Colonic mucosa (tissue), 4 donors: ENCODE measurements at regions of chr6 and their contacts with region 1.

Region 1: GRCh38 chr6:50816115-50816675 is 2.5 kb upstream of the TFAP2B start:
- DNase-seq: peak; percentile 80
- H3K4me3 ChIP-seq: peak overlapping the region; percentile 40
- H3K27ac ChIP-seq: no peak overlapping the region
- H3K4me1 ChIP-seq: no peaks in the 10 kb centered on the region
- H3K27me3 ChIP-seq: peaks cover 46% of the 10 kb centered on the region
- CTCF ChIP-seq: peak; percentile 94

Region 2: DNA sequence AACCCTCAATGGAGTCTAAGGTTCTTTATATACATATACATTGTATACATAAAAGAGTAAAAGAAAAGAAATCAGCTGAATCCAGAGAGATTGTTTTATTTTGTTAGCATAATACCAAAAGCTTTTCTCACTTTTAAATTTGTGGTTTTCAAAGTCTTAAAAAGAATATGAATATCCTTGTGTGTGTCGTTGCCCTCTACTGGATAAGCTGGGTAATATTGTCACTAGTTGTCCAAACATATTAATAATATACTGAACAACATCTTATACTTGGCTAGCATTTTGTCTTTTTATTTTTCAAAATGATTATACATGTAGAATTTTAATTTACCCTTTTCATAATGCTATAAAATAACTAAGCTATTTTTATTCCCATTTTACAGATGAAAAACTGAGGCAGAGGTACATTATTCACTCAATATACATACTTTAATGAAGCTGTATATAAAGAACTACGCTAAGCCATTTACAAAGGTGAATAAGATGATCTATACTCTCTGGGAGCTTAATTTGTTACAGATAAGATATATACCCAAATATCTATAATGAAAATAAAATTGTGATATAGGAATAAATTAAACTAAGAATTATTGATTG is 534.2 kb after region 1 on chr6:
- intact Hi-C with region 1: loop called (anchors 10 kb)
- DNase-seq: no peak
- H3K4me3 ChIP-seq: no peak overlapping the region
- H3K27ac ChIP-seq: no peak overlapping the region
- H3K4me1 ChIP-seq: no peaks in the 10 kb centered on the region
- H3K27me3 ChIP-seq: no peaks in the 10 kb centered on the region
- CTCF ChIP-seq: peak; percentile 13

Region 3: DNA sequence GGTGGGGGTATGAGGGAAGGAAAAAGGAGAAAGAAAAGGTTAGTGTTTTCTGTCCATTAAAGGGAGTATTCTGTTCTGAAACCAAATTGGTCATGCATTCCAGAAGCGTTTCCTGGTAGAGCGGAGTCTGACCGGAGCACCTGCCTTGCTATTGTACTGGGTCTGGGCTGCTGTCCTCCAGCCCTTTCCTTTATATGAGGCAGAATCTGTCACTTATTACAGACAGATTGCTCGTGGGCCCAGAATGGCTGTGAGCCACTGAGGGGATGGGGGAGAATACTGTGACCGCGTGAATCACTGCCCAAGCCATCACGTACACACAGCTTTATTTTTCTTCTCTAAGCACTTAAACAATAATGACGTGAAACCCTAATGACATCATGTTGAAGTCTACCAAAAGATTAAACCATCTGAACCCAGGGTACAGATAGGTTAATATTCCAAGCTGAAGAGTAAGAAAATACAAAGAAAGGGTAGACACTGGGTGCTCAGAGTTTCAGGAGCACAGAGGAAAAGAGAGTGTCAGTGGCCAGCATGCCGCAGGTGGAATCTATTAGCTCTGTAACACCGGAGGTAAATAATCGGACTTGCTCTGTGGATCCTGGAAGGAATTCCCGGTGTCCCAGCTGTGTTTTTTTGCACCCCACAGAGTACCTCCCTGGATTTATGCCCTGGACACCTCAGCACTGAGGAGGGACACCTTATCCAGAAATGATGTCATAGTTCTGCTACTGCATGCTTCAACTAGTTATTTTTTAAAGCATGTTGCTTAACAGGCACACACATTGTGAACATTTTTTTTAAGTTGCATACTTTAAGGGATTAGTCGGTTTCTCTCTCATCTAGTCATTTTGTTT is 697.9 kb after region 1 on chr6:
- intact Hi-C with region 1: loop called (anchors 10 kb)
- DNase-seq: no peak
- H3K4me3 ChIP-seq: no peak overlapping the region
- H3K27ac ChIP-seq: no peak overlapping the region
- H3K4me1 ChIP-seq: no peaks in the 10 kb centered on the region
- H3K27me3 ChIP-seq: no peaks in the 10 kb centered on the region
- CTCF ChIP-seq: no peak

Region 4: DNA sequence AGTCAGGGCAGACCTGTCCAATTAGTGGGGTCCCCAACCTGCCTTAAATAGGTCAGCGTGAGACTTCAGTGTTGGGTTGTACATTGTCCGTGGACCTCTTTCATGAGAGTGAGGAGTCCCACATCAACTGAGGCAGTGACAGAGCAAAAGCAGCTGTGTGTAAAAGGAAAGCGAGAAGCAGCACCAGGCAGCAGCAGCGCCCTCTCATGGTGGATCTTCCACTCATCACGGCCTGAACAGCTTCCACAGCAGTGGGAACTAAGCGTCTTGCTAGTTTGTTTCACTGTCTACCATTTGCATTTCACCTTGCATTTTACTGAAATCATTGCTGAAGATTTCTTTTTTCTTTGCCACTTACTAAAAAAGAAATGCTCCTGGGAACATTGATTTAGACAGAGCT is 937.4 kb after region 1 on chr6:
- intact Hi-C with region 1: loop called (anchors 5 kb)
- DNase-seq: peak; percentile 22
- H3K4me3 ChIP-seq: no peak overlapping the region
- H3K27ac ChIP-seq: no peak overlapping the region
- H3K4me1 ChIP-seq: no peaks in the 10 kb centered on the region
- H3K27me3 ChIP-seq: no peaks in the 10 kb centered on the region
- CTCF ChIP-seq: no peak

Region 5: DNA sequence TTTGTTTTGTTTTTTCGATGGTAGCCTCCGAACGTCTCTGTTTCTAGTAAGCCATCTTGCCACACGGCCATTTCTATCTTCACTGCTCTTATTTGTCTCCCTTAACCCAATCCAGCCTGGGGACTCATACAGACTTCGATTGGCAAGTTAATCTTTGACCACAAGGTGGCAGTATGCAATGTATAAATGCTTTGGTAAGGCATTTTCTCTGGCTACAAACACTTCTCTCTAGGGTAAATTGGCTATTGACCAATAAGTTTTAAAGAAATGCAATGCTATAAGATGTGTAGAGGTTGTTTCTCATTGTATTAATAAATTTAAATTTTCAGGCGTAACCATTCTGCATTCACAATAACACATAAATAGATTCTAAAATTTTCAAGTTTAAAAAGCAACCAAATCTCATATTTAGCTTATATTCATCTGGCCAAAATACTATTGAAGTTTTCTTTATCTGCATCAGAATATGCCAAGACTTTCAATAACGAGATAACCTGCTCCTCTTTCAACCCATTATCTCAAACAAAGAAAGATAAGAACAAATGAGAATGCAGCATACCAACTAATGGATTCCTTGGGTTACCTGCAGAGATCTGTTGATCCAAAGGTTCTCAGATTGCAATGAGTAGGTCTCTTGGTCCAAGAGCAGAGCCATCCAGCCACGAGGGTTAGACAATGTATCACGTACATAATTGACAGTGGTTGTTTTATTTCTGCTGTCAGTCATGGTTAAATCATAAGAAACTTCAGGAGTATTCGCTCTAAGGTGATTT is 1039.3 kb after region 1 on chr6:
- intact Hi-C with region 1: loop called (anchors 10 kb)
- DNase-seq: peak; percentile 30
- H3K4me3 ChIP-seq: no peak overlapping the region
- H3K27ac ChIP-seq: no peak overlapping the region
- H3K4me1 ChIP-seq: no peaks in the 10 kb centered on the region
- H3K27me3 ChIP-seq: no peaks in the 10 kb centered on the region
- CTCF ChIP-seq: peak; percentile 61

Region 6: DNA sequence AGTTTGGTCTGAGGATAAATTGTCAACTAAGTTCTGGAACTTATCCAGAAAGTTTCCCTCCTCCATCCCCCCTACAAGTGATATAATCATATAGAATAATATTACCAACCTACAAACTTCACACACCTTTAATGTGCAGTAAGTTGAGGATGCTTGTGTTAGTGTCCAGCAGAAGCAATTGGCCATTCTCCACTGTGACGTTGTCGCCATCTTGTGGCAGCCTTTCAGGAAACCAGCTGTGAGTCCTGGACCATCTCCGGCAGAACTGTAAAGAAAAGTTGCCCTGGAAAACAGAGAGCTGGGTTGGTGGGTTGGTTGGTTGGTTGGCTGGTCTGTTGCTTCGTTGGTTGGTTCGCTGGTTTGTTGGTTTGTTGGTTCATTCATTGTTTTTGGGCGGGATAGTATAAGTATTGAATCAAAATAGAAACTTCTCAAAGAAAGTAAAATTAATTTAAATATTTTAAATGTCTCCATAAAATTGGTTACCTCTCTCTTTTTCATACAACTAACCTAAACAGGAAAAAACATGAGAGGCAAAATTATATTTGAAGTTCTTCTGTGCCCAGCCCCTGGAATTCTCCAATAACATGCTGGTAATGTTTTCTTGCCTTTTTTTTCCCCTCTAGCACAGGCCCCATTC is 1143.7 kb after region 1 on chr6:
- intact Hi-C with region 1: loop called (anchors 10 kb)
- DNase-seq: peak; percentile 70
- H3K4me3 ChIP-seq: no peak overlapping the region
- H3K27ac ChIP-seq: no peak overlapping the region
- H3K4me1 ChIP-seq: no peaks in the 10 kb centered on the region
- H3K27me3 ChIP-seq: no peaks in the 10 kb centered on the region
- CTCF ChIP-seq: peak; percentile 54

Region 7: DNA sequence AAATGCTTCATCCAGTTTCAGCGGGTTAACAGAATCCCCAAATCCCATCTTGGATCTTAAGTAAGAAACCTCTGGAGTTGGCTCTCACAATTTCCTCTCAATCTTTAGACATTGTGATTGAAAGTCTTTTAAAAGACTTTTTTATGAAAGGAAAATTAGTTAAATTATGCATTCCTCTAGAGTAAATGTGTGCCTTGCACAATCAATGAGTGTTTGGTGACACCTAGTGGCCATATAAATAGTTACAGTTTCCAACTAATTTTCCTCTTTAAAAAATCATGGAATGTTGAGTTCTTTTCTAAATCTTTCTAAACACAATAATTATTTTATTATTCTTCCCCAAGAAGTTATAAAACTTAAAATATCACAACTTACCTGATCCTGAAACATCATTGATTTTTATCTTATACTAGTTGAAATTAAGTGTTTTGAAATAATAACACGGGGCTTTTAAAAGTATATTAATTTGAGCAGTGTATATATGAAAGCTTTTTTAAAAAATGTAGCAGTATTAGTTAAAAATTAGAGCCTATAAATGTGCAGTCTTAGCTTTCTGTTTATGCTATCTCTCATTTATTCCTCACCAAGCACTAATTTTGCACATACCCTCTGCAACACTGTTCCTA is 1204.9 kb after region 1 on chr6:
- intact Hi-C with region 1: loop called (anchors 10 kb)
- DNase-seq: no peak
- H3K4me3 ChIP-seq: no peak overlapping the region
- H3K27ac ChIP-seq: no peak overlapping the region
- H3K4me1 ChIP-seq: no peaks in the 10 kb centered on the region
- H3K27me3 ChIP-seq: no peaks in the 10 kb centered on the region
- CTCF ChIP-seq: peak; percentile 82